ENCODE measurements at regions of chr6 and their contacts with region 1.

Region 1: GRCh38 chr6:140043336-140043735 is 668.9 kb upstream of the CITED2 start:
- DNase-seq: peak; percentile 74 to 91 (median 82)
- H3K4me3 ChIP-seq: no peak overlapping the region
- H3K4me3 Mint-ChIP-seq: no peak overlapping the region
- H3K27ac ChIP-seq: peak overlapping the region in 1 of 2 donors; percentile 63
- H3K27ac Mint-ChIP-seq: peak overlapping the region in 6 of 7 donors; percentile 37 to 88 (median 76)
- H3K4me1 ChIP-seq: peaks cover 51 to 72% of the 10 kb centered on the region in 2 donors
- H3K4me1 Mint-ChIP-seq: peaks cover 59% of the 10 kb centered on the region
- H3K27me3 ChIP-seq: no peaks in the 10 kb centered on the region
- H3K27me3 Mint-ChIP-seq: no peaks in the 10 kb centered on the region
- CTCF ChIP-seq: no peak

Region 2: DNA sequence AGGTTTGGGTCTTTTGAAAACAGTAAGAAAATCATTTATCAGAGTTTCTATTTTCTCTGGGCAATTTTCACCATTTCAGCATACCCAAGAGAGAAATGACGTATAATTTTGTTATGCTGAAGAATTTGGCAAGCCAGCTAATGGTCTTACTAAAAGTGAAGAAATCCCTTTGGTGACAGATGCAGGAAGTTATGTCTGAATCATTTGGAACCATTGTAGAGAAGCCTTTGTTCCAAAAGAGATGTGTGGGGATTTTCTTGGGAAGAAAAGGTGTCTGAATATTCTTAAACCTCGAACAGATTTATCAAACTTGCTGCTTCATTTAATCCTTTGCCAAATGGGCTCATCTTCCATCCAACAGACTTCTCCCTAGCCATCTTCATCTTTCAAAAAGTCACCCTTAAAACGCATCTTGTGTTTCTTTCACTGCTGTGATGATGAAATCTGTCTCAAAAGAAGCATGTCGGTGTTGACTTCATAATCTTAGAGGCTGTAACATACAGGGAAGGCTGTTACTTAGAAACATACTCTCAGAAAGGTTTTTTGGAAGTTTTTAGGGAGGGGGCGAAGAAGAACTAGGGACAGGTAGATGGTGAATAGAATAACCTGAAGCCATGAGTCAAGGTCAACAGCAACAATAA is 708.4 kb before region 1 on chr6:
- intact Hi-C with region 1: loop called in 1 of 2 experiments (anchors 10 kb)
- DNase-seq: peak; percentile 80 to 94 (median 91)
- H3K4me3 ChIP-seq: peak overlapping the region in 1 of 3 experiments; percentile 10
- H3K4me3 Mint-ChIP-seq: no peak overlapping the region
- H3K27ac ChIP-seq: peak overlapping the region in 1 of 2 donors; percentile 91
- H3K27ac Mint-ChIP-seq: peak overlapping the region; percentile 92 to 99 (median 97)
- H3K4me1 ChIP-seq: peaks cover 52 to 60% of the 10 kb centered on the region in 2 donors
- H3K4me1 Mint-ChIP-seq: peaks cover 63% of the 10 kb centered on the region
- H3K27me3 ChIP-seq: no peaks in the 10 kb centered on the region
- H3K27me3 Mint-ChIP-seq: peaks cover 0 to 2% (median 0%) of the 10 kb centered on the region in 3 donors
- CTCF ChIP-seq: no peak

Region 3: DNA sequence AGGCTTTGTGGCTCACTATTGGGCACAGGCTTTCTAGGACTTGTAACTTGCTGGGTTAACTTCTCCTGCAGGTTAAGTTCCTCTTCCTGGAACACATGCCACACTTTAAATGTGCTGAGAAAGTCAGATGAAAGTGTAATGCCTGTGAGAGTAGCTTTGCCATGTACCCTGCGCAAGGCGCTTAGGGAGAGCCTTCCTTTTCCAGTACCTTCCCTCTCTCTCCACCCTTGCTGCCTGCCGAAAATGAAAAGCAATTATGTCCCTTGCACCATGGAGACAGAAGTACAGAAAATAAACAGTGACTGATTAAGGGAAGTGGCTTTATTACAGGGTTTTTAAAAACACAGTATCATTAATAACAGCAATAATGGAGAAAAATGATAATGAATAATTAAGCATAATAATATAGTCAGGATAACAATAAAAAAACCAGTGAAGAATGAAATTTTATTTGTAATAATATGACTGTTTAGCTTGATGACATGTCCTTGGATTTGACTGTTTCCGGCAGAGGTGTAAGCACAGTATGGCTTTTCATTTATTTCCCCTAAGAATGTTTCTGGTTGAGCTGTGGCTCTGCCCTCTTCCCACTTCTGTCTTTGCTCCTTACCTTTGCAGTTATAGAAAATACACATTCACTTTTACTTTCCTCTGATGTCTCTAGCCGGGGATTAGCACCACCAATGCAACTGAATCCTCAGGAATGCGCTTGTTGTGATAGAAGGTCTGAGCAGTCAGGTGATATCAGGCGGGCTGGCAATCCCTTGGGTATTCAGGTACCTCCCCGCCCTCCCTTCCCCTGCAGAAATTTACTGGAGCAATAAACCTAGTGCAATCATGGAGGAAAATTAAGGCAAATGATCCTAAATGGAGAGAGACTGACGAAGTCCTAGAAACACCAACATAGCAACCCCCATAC is 196.5 kb before region 1 on chr6:
- intact Hi-C with region 1: loop called (anchors 10 kb)
- DNase-seq: peak; percentile 36 to 43 (median 42)
- H3K4me3 ChIP-seq: peak overlapping the region in 2 of 3 experiments; percentile 19 to 60
- H3K4me3 Mint-ChIP-seq: peak overlapping the region; percentile 25 to 87
- H3K27ac ChIP-seq: peak overlapping the region; percentile 36 to 82
- H3K27ac Mint-ChIP-seq: peak overlapping the region; percentile 88 to 95 (median 93)
- H3K4me1 ChIP-seq: peaks cover 28 to 40% of the 10 kb centered on the region in 2 donors
- H3K4me1 Mint-ChIP-seq: peaks cover 38% of the 10 kb centered on the region
- H3K27me3 ChIP-seq: no peaks in the 10 kb centered on the region
- H3K27me3 Mint-ChIP-seq: no peaks in the 10 kb centered on the region
- CTCF ChIP-seq: no peak

Region 4: GRCh38 chr6:139927236-139927635 is 116.1 kb before region 1 on chr6:
- intact Hi-C with region 1: loop called in 1 of 2 experiments (anchors 10 kb)
- DNase-seq: peak in 2 of 3 donors; percentile 21 to 44
- H3K4me3 ChIP-seq: no peak overlapping the region
- H3K4me3 Mint-ChIP-seq: no peak overlapping the region
- H3K27ac ChIP-seq: no peak overlapping the region
- H3K27ac Mint-ChIP-seq: no peak overlapping the region
- H3K4me1 ChIP-seq: peaks cover 0 to 2% of the 10 kb centered on the region in 2 donors
- H3K4me1 Mint-ChIP-seq: peaks cover 19% of the 10 kb centered on the region
- H3K27me3 ChIP-seq: no peaks in the 10 kb centered on the region
- H3K27me3 Mint-ChIP-seq: no peaks in the 10 kb centered on the region
- CTCF ChIP-seq: peak; percentile 51